SK-N-SH (cell line): ENCODE measurements at regions of chr2 and their contacts with region 1.

Region 1: DNA sequence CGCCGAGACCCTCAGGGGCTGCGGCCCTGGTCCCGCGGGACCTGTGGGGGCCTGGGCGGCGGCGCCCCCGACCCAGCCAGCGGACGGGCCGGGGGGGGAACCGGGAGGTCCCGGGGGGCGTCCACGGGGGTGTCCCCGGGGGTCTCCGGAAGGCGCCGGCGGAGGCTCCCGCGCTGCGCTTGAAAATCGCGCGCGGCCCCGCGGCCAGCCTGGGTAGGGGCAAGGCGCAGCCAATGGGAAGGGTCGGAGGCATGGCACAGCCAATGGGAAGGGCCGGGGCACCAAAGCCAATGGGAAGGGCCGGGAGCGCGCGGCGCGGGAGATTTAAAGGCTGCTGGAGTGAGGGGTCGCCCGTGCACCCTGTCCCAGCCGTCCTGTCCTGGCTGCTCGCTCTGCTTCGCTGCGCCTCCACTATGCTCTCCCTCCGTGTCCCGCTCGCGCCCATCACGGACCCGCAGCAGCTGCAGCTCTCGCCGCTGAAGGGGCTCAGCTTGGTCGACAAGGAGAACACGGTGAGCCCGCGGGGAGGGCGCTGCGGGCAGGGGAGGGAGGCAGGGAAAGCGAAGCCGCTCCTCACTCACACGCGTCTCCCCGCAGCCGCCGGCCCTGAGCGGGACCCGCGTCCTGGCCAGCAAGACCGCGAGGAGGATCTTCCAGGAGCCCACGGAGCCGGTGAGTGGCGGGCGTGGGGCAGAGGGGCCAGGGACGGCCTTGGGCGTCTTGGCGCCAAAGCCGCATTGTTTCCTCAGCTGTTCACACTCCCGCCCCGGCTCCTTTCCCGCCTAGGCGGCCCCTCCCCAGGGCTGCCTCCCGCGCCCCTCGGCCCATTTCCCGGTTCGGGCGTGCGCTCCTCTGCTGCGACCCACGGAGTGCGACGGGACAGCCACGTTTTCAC is at the start of gene RRM2:
- DNase-seq: peak; percentile 99
- H3K4me3 ChIP-seq: peak within 1 kb of the TSS; percentile 63 to 69
- H3K27ac ChIP-seq: peak within 1 kb of the TSS; percentile 84 to 87
- H3K4me1 ChIP-seq: peaks cover 12 to 30% of the 10 kb centered on the region in 2 experiments; a peak in 3 of 4 replicates
- H3K27me3 ChIP-seq: no peaks in the 10 kb centered on the region
- CTCF ChIP-seq: no peak
- EP300 ChIP-seq: no peak
- RAD21 ChIP-seq: no peak
- polyA plus RNA-seq, gene RRM2: 23.6 and 38.9 TPM in 2 replicates

Region 2: GRCh38 chr2:10141736-10142642 is 19.4 kb after region 1 on chr2:
- CTCF ChIA-PET with region 1: interaction called, 220 read pairs
- POLR2A ChIA-PET with region 1: no interaction called
- DNase-seq: peak; percentile 88
- H3K4me3 ChIP-seq: no peak overlapping the region
- H3K27ac ChIP-seq: no peak overlapping the region
- H3K4me1 ChIP-seq: peaks cover 0 to 2% of the 10 kb centered on the region in 2 experiments; a peak in 1 of 4 replicates
- H3K27me3 ChIP-seq: no peaks in the 10 kb centered on the region
- CTCF ChIP-seq: peak; percentile 65
- EP300 ChIP-seq: no peak
- RAD21 ChIP-seq: peak; percentile 74

Region 3: GRCh38 chr2:10170256-10170655 is 47.6 kb after region 1 on chr2:
- CTCF ChIA-PET with region 1: interaction called, 13 read pairs
- POLR2A ChIA-PET with region 1: no interaction called
- DNase-seq: peak; percentile 63
- H3K4me3 ChIP-seq: no peak overlapping the region
- H3K27ac ChIP-seq: peak overlapping the region; percentile 37 to 90
- H3K4me1 ChIP-seq: peaks cover 19 to 63% of the 10 kb centered on the region in 2 experiments; a peak in 3 of 4 replicates
- H3K27me3 ChIP-seq: no peaks in the 10 kb centered on the region
- CTCF ChIP-seq: no peak
- EP300 ChIP-seq: no peak; a peak in 2 of 4 replicates
- RAD21 ChIP-seq: no peak

Region 4: DNA sequence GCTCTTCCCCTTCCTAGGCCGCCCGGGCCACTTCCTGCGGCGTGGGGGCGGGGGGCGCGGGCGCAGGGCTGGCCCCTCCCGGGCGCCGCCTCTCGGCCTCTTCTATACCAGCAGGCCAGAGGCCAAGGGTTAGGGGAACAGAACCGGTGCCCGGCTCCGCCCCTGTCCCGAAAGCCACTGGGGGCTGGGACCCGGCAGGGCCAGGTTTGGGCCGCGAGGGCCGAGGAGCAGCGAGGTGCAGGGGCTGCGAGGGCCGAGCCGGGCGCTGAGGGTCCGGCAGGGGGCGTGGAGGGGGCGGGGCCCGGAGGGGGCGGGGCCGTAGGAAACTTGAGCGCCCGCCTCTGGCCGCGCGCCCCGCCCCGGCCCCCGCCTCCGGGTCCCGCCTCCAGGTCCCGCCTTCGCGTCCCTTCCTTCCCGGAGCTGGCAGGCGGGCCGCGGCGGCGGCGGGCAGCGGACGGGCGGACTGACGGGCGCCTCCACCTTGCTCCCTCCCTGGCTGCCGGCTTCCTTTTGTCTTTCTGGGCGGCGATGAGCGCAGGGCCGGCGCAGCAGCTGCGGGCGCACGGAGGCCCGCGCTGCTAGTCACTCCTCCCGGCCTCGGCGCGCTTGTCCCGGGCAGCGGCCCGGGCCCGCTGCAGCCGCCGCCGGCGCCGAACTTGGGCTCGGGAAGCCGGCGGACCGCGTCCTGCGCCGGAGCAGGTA is 180.0 kb after region 1 on chr2 and contains the start of gene HPCAL1:
- CTCF ChIA-PET with region 1: interaction called, 72 read pairs
- POLR2A ChIA-PET with region 1: interaction called, 4 read pairs
- DNase-seq: peak; percentile 100
- H3K4me3 ChIP-seq: peak within 1 kb of the TSS; percentile 64 to 80
- H3K27ac ChIP-seq: peak within 1 kb of the TSS; percentile 15 to 85; a peak in 3 of 4 replicates
- H3K4me1 ChIP-seq: peaks cover 11 to 59% of the 10 kb centered on the region in 2 experiments
- H3K27me3 ChIP-seq: no peaks in the 10 kb centered on the region
- CTCF ChIP-seq: peak; percentile 63
- EP300 ChIP-seq: no peak
- RAD21 ChIP-seq: peak; percentile 34; the same call in 1 of the 2 replicates
- polyA plus RNA-seq, gene HPCAL1: 34.6 and 77.0 TPM in 2 replicates

Region 5: GRCh38 chr2:10424051-10424450 is 301.4 kb after region 1 on chr2:
- CTCF ChIA-PET with region 1: interaction called, 30 read pairs
- POLR2A ChIA-PET with region 1: no interaction called
- DNase-seq: no peak
- H3K4me3 ChIP-seq: no peak overlapping the region
- H3K27ac ChIP-seq: no peak overlapping the region
- H3K4me1 ChIP-seq: peaks cover 0 to 3% of the 10 kb centered on the region in 2 experiments; a peak in 1 of 4 replicates
- H3K27me3 ChIP-seq: no peaks in the 10 kb centered on the region
- CTCF ChIP-seq: no peak
- EP300 ChIP-seq: no peak
- RAD21 ChIP-seq: no peak

Region 6: DNA sequence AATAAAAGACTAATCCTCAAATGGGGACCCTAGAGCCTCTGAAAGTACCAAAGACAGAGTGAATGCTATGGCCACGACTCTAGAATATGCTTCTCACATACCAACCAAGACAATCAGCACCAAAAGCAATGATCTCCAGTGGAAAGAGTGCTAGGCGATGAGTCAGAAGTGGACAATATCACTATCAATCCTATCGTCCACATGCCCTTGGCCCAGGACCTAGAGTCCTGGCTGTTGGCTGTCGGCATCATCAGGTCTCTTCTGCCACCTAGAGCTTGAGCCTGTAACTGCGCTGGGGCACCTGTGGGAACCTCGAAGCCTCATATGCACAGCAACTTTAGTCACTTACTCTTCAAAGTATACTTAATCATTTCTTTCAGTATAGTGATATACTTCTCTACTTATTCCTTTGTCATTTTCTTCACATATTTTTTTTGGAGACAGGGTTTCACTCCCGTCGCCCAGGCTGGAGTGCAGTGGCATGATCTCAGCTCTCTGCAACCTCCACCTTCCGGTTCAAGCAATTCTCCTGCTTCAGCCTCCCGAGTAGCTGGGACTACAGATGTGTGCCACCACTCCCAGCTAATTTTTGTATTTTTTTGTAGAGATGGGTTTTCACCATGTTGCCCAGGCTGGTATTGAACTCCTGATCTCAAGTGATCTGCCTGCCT is 537.4 kb after region 1 on chr2:
- CTCF ChIA-PET with region 1: interaction called, 13 read pairs
- POLR2A ChIA-PET with region 1: no interaction called
- DNase-seq: peak; percentile 70
- H3K4me3 ChIP-seq: no peak overlapping the region
- H3K27ac ChIP-seq: peak overlapping the region in 1 of 2 experiments; percentile 68; a peak in 2 of 4 replicates
- H3K4me1 ChIP-seq: 0 out of 4 replicates have a peak, but pooled peaks cover 0 to 8% of the 10 kb centered on the region in 2 experiments
- H3K27me3 ChIP-seq: no peaks in the 10 kb centered on the region
- CTCF ChIP-seq: peak; percentile 91
- EP300 ChIP-seq: peak in 1 of 2 experiments; percentile 21; a peak in 1 of 4 replicates
- RAD21 ChIP-seq: peak; percentile 85